Prostate gland (tissue), 2 donors: ENCODE measurements at regions of chr14 and their contacts with region 1.

Region 1: GRCh38 chr14:71320107-71320733 is 413.0 kb downstream of the PCNX1 start:
- DNase-seq: peak; percentile 95
- H3K4me3 ChIP-seq: peak within 1 kb of the TSS; percentile 76 to 99
- H3K27ac ChIP-seq: peak within 1 kb of the TSS; percentile 95 to 99
- H3K4me1 ChIP-seq: no peaks in the 10 kb centered on the region
- H3K27me3 ChIP-seq: no peaks in the 10 kb centered on the region
- CTCF ChIP-seq: peak in 1 of 4 experiments; percentile 33
- POLR2A ChIP-seq: peak; percentile 78

Region 2: DNA sequence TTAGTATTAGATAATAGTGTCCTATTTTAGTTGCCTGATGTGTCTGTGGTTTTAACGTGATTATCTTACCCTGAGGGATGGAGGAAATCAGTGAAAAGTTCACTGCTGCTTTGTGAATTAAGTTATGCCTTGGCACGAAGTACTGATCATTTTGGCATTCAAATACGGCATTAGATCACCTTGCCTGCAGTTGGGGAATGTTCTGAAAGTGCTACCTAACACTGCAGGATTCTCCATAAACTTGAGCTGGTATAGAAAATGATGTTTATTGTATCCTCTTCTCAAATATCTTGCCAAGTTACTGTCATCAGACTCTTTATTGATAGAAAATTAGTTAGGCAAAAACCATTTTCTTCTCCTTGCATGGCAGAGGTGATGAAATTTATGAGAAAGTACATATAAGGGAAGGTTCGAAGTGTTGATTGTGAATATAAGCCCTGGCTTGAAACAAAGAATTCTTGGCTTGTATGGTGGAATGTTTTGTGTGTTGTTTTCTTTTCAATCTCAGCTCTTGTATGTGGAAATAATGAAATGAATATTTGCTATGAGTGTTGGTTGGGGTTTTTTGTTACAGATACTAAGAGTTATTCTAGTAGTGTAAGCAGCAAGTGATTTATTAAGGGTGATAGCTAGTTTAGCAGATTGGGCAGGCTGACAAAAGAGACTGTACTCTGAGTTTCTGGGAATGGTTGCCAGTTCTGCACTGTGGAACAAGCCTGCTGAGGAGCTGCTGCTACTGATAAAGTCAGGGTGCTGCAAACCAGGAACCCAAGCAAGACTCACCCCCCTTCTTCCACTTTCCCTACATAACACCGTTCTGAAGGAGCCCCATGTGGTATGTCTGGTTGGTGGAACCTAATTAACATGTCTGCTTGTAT is 35.3 kb after region 1 on chr14:
- intact Hi-C with region 1: loop called (anchors 5 kb)
- DNase-seq: peak; percentile 42
- H3K4me3 ChIP-seq: no peak overlapping the region
- H3K27ac ChIP-seq: peak overlapping the region in 1 of 2 donors; percentile 13
- H3K4me1 ChIP-seq: peaks cover 4% of the 10 kb centered on the region
- H3K27me3 ChIP-seq: no peaks in the 10 kb centered on the region
- CTCF ChIP-seq: no peak
- POLR2A ChIP-seq: no peak

Region 3: GRCh38 chr14:71465316-71465715 is 145.1 kb after region 1 on chr14:
- intact Hi-C with region 1: no loop called
- DNase-seq: no peak
- H3K4me3 ChIP-seq: no peak overlapping the region
- H3K27ac ChIP-seq: no peak overlapping the region
- H3K4me1 ChIP-seq: no peaks in the 10 kb centered on the region
- H3K27me3 ChIP-seq: no peaks in the 10 kb centered on the region
- CTCF ChIP-seq: no peak
- POLR2A ChIP-seq: no peak

Region 4: DNA sequence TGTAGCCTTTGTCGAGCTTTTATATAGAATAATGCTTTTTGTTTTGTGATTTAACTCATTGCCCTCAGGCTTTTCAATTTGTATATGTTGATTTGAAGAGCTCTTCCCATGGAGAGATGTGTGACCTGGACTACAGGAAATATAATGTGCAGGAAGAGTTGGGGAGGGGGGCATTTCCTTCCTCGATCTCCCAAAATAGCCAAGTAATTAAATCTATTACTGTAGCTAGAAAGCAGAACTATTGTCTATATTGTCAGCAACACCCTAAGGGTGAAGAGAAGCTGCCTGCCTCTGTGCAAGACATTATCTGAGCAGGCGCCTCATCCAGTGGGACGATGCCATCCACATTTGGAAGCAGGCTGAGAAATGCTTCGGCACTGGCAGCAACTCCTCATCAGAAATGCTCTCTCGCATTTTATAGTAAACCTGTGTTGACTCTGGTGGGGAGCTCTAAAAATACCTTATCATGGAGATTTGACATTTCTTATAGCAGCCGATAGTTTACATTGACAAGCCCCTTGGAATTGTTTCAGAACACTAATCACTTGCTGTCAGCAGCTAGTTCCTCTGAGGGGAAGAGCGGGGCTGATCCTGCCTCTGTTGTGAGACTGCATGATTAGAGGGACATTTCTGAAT is 219.5 kb after region 1 on chr14:
- intact Hi-C with region 1: loop called (anchors 5 kb)
- DNase-seq: no peak
- H3K4me3 ChIP-seq: no peak overlapping the region
- H3K27ac ChIP-seq: no peak overlapping the region
- H3K4me1 ChIP-seq: no peaks in the 10 kb centered on the region
- H3K27me3 ChIP-seq: no peaks in the 10 kb centered on the region
- CTCF ChIP-seq: no peak
- POLR2A ChIP-seq: no peak

Region 5: GRCh38 chr14:71586131-71586897 is 266.1 kb after region 1 on chr14:
- intact Hi-C with region 1: loop called (anchors 10 kb)
- DNase-seq: no peak
- H3K4me3 ChIP-seq: no peak overlapping the region
- H3K27ac ChIP-seq: no peak overlapping the region
- H3K4me1 ChIP-seq: no peaks in the 10 kb centered on the region
- H3K27me3 ChIP-seq: no peaks in the 10 kb centered on the region
- CTCF ChIP-seq: no peak
- POLR2A ChIP-seq: no peak

Region 6: DNA sequence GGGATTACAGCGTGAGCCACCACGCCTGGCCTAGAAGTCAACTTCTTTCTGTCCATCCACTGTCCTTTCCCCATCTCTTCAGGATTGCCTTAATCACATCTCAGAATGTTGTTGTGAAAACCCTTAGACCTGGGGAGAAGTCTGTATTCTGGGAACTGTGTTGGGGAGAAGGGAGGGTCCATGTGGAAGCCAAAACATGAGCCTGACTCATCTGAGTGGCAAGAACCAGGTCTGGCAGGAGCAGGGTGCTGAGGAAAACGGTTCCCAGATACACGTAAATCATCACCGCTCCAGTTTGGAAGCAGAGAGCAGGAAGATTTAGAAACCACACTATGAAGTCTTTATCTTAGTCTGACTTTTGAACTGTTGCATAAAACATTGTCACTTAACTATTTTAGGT is 366.5 kb after region 1 on chr14:
- intact Hi-C with region 1: loop called (anchors 5 kb)
- DNase-seq: no peak
- H3K4me3 ChIP-seq: no peak overlapping the region
- H3K27ac ChIP-seq: no peak overlapping the region
- H3K4me1 ChIP-seq: no peaks in the 10 kb centered on the region
- H3K27me3 ChIP-seq: no peaks in the 10 kb centered on the region
- CTCF ChIP-seq: no peak
- POLR2A ChIP-seq: no peak

Region 7: DNA sequence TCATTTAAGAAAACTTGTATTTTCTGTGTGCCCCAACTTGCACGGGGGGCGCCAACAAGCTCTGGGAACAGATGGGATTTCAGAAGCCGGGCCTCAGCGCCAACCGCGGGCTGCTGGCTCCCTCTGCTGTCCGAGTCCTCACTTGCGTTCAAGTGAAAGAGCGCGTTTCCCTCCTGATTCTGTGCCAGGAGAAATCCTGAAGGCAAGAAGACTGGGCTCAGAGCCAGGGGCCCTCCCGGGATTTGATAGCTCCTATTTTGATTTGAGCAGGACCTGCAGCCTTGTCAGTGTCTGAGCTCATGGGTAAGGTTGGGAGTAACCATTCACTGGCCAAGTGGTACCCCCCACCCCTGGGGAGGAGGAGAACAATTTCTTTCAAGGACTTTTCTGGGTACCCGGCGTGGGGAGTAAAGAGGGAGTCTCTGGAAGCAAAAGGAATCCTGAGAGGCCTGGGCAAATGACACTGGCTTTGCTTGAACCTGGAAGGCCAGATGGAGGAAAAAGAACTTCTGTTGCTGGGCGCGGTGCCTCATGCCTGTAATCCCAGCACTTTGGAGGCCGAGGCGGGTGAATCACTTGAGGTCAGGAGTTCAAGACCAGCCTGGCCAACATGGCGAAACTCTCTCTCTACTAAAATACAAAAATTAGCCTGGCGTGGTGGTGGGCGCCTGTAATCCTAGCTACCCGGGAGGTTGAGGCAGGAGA is 433.1 kb after region 1 on chr14:
- intact Hi-C with region 1: loop called (anchors 2 kb)
- DNase-seq: peak; percentile 63
- H3K4me3 ChIP-seq: no peak overlapping the region
- H3K27ac ChIP-seq: no peak overlapping the region
- H3K4me1 ChIP-seq: no peaks in the 10 kb centered on the region
- H3K27me3 ChIP-seq: no peaks in the 10 kb centered on the region
- CTCF ChIP-seq: peak; percentile 68 to 92 (median 86)
- POLR2A ChIP-seq: no peak